ENCODE measurements at regions of chr1 and their contacts with region 1.

Region 1: GRCh38 chr1:44213222-44214112 is at the start of gene DMAP1:
- DNase-seq: peak; percentile 82 to 91 (median 84)
- ATAC-seq: peak; percentile 80 to 95 (median 90)
- H3K4me3 ChIP-seq: peak within 1 kb of the TSS; percentile 65 to 99 (median 87)
- H3K27ac ChIP-seq: peak within 1 kb of the TSS; percentile 39 to 86 (median 82)
- H3K4me1 ChIP-seq: peaks cover 0 to 23% (median 15%) of the 10 kb centered on the region in 12 donors
- H3K27me3 ChIP-seq: no peaks in the 10 kb centered on the region
- CTCF ChIP-seq: peak in 1 of 12 donors; percentile 8
- POLR2A ChIP-seq: peak in 1 of 2 donors; percentile 58
- total RNA-seq, gene DMAP1: 23.5 to 35.5 (median 27.7) TPM

Region 2: GRCh38 chr1:44294588-44295007 is 81.1 kb after region 1 on chr1:
- intact Hi-C with region 1: loop called in 2 of 10 experiments (anchors 5 kb)
- DNase-seq: peak in 2 of 5 donors; percentile 14 to 44
- ATAC-seq: peak in 2 of 4 donors; percentile 21 to 51
- H3K4me3 ChIP-seq: no peak overlapping the region
- H3K27ac ChIP-seq: peak overlapping the region in 3 of 12 donors; percentile 62 to 76 (median 72)
- H3K4me1 ChIP-seq: peaks cover 0 to 19% (median 7%) of the 10 kb centered on the region in 12 donors
- H3K27me3 ChIP-seq: no peaks in the 10 kb centered on the region
- CTCF ChIP-seq: peak in 4 of 12 donors; percentile 10 to 32 (median 20)
- POLR2A ChIP-seq: no peak

Region 3: DNA sequence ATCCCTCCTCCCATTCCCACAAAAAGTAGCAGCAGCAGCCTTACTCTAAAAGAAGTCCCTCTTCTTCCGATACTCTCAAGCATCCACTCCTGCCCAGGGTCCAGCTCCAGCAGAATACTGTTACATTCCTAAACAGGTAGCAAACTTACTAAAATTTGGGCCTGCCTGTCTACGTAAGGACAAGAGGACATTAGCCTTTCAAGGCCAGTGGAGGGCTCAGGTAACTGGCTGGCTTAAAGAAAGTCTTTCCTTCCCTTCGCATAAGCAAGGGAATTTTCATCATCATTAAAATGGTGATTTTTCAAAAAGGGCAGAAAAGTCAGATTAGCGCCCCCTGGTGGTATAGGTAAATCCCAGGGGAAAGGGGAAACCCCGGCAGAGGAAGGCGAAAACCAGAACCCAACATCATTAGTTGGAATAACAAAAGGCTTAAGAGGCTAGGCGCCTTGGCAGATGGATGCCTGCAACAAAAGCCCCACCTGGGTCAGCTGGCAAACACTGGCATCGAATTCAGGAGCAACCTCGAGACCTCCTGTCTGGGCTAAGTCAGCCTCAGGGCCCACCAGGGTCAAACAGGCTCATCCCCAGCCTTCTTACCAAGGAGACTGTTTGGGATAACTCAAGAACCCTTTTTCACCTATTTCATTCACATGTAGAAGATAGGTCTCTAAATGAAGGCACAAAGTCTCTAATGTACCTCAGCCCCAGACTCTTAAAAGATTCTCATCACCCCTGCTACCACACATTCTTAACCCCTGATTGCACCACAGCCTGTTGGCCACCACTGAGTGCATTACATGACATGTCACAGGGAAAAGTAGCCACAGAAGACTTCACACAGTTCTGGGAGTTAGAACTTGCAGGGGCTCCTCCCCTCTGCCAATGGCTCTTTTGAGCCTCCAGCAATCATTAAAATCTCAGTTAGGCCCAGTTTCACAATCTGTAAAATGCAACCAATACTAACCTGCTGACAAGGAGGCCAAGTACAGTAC is 104.9 kb after region 1 on chr1:
- intact Hi-C with region 1: loop called in 8 of 10 experiments (anchors 1 to 5 kb)
- DNase-seq: peak in 2 of 5 donors; percentile 22 to 28
- ATAC-seq: peak in 1 of 4 donors; percentile 26
- H3K4me3 ChIP-seq: no peak overlapping the region
- H3K27ac ChIP-seq: no peak overlapping the region
- H3K4me1 ChIP-seq: peaks cover 0 to 6% (median 0%) of the 10 kb centered on the region in 12 donors
- H3K27me3 ChIP-seq: no peaks in the 10 kb centered on the region
- CTCF ChIP-seq: peak; percentile 62 to 87 (median 76)
- POLR2A ChIP-seq: no peak

Region 4: DNA sequence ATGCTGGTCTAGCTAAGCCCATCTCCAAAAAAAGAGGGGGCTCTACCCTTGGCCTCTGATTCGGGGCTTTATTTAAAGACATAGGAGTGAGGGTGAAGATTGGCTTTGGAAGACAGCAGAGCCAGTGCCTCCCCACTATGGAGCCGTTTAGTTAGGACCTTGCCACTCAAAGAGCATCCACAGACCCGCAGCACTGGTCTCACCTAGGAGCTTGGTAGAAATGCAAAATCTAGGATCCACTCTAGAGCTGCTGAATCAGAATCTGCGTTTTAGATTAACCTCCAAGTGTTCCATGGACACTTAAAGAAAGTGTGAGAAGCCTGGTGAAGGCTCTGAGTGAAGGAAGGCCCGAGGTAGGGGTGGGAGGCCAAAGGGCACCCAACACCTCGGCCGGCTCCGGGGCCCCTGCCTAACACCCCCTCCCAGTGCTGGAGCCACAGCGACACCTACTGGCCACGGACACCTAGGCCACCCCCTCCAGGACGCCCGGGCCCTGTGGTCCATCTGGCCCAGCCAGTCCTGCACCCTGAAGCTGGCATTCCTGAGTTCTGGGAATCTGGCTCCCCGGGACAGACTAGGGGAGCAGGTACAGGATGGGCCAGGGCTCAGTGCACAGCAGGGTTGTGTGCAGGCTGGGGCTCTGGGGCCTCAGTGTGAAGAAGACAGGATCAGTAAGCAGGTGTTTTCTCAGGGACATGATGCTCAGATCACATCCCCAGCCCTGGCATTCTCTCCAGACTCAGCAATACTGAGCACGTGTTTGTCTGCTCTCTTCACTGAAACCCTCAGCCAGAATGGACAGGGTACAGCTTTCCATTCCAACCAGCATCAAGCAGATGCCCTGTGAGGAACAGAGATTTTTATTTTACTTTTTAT is 381.6 kb after region 1 on chr1:
- intact Hi-C with region 1: loop called (anchors 2 to 10 kb)
- DNase-seq: peak; percentile 77 to 93 (median 79)
- ATAC-seq: peak; percentile 92 to 96 (median 94)
- H3K4me3 ChIP-seq: no peak overlapping the region
- H3K27ac ChIP-seq: no peak overlapping the region
- H3K4me1 ChIP-seq: peaks cover 0 to 3% (median 0%) of the 10 kb centered on the region in 12 donors
- H3K27me3 ChIP-seq: peaks cover 0 to 11% (median 0%) of the 10 kb centered on the region in 9 donors
- CTCF ChIP-seq: peak in 11 of 12 donors; percentile 88 to 99 (median 98)
- POLR2A ChIP-seq: no peak

Region 5: DNA sequence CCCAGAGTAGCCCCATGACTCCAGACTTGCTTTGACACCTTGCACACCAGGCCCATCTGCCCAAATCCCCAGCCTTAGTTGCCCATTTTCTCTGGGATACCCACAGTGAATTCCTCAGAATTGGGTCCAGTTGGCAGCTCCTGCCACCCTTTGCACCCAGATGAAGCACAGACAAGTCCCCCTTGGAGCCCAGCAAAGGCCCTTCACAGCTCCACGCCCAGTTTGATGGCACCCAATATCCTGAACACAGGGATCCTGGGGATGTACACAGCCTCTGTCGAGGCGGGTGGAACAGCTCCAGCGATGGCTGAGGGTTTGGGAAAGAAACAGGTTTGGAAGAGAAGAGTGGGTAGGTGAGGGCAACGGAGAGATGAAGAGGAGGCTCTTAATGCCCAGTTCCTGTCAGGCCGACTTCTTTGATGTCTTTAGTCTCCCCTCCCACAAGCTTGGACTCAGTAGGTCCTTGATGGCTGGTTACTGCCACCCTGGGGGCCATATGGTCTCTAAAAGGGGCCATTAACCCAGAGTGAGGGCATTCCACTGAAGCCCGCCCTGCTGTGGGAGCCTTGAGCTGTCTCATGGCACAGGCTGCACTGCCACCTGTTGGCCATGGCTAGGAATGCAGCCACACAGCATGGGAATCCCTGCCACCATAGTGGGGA is 439.1 kb after region 1 on chr1:
- intact Hi-C with region 1: loop called in 8 of 10 experiments (anchors 5 to 10 kb)
- DNase-seq: peak; percentile 64 to 83 (median 73)
- ATAC-seq: peak; percentile 55 to 81 (median 78)
- H3K4me3 ChIP-seq: no peak overlapping the region
- H3K27ac ChIP-seq: no peak overlapping the region
- H3K4me1 ChIP-seq: peaks cover 0 to 11% (median 0%) of the 10 kb centered on the region in 12 donors
- H3K27me3 ChIP-seq: no peaks in the 10 kb centered on the region
- CTCF ChIP-seq: peak; percentile 87 to 96 (median 91)
- POLR2A ChIP-seq: no peak

Measured in heart left ventricle (tissue), 16 donors.